Keratinocyte (primary cell): ENCODE measurements at regions of chr12 and their contacts with region 1.

Region 1: GRCh38 chr12:117367011-117367638 is 5.7 kb upstream of the NOS1 start:
- DNase-seq: peak; percentile 56
- H3K4me3 ChIP-seq: no peak overlapping the region
- H3K27ac ChIP-seq: no peak overlapping the region
- H3K4me1 ChIP-seq: peaks cover 5% of the 10 kb centered on the region
- H3K27me3 ChIP-seq: peaks cover 4% of the 10 kb centered on the region
- CTCF ChIP-seq: peak; percentile 89 to 94 (median 89)

Region 2: DNA sequence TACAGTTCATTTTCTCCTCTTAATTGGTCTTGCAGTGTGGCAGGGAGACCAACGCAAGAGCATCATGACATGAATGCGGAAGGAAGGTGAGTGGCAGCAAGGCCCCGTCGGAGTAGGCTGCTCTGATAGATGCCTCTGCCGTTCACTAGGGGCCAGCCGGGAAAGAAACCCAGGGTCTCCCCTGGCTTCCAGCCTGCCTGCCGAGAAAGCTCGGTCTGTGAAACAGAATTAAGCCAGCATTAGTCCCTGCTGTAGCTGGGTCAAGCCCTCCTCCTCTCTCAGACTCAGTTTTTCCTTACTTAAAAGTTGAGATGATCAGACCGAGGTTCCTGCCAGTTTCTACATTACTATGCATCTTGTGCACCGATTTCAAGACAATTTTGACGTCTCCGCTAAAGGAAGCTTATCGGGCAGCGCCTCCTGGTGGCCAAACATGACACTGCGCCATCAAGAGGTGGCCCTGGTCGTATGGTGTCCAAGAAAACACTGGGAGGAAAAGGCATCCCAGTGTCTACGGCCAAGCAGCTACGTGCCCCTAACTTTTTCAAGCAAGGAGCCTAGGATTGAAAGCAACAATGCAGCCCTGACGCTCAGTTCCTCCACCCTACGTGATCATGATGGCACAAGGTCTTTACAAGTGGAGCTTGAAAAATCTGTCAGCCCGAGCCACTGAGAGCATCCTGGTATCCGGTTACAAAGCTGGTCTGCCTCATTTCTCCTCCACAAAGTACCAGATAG is 470.0 kb after region 1 on chr12:
- dilution Hi-C with region 1: loop called (anchors 25 kb)
- DNase-seq: no peak
- H3K4me3 ChIP-seq: no peak overlapping the region
- H3K27ac ChIP-seq: no peak overlapping the region
- H3K4me1 ChIP-seq: peaks cover 2% of the 10 kb centered on the region
- H3K27me3 ChIP-seq: peaks cover 4% of the 10 kb centered on the region
- CTCF ChIP-seq: peak; percentile 97 to 99 (median 97)